ENCODE measurements at regions of chr11 and their contacts with region 1.

Region 1: DNA sequence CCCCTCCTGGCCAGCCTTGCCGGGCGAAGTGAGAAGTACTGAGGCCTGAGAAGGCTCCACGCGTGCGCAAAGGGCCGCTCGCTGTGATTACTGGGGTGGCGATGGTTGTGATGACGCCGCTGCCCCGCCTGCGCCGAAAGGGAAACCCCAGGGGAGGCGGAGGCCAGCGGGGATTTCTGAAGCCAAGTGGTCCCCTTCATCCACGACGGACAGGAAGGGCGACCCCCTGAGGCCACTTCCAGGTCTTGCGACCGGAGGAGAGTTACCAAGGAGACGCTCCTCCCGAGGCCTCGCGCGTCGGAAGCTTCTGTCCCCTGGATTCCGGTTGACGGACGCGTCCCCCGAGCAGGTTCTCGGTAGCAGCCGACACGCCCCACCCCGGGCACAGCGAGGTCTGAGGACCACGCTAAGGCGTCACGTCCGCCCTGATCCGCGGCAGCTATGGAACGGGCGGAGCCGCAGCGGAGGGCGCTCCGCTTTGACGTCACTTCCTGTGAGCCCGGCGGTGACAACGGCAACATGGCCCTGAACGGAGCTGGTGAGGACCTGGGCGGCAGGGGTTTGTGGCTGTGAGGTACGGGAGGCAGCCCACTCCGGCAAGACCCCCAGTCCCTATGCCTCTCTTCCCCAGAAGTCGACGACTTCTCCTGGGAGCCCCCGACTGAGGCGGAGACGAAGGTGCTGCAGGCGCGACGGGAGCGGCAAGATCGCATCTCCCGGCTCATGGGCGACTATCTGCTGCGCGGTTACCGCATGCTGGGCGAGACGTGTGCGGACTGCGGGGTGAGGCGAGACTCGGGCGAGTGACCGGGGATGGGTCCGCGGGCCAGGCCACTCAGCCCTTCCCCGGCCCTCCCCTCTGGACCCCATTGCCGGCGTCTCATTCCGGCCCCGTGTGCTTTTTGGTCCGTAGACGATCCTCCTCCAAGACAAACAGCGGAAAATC is at the start of gene ZNRD2:
- DNase-seq: peak; percentile 99
- H3K4me3 Mint-ChIP-seq: peak within 1 kb of the TSS; percentile 87
- H3K27ac Mint-ChIP-seq: peak within 1 kb of the TSS; percentile 97
- H3K4me1 Mint-ChIP-seq: peaks cover 61% of the 10 kb centered on the region
- H3K27me3 Mint-ChIP-seq: no peaks in the 10 kb centered on the region
- total RNA-seq, gene ZNRD2: 41.4 to 42.5 TPM

Region 2: GRCh38 chr11:63768237-63769043 is 1801.8 kb before region 1 on chr11 and contains the start of gene ZFTA:
- CTCF ChIA-PET with region 1: no interaction called
- intact Hi-C with region 1: no loop called
- DNase-seq: peak; percentile 49
- H3K4me3 Mint-ChIP-seq: peak within 1 kb of the TSS; percentile 88
- H3K27ac Mint-ChIP-seq: no peak within 1 kb of the TSS
- H3K4me1 Mint-ChIP-seq: peaks cover 11% of the 10 kb centered on the region
- H3K27me3 Mint-ChIP-seq: peaks cover 12% of the 10 kb centered on the region
- total RNA-seq, gene ZFTA: 0.91 TPM

Region 3: GRCh38 chr11:65366340-65366773 is 203.9 kb before region 1 on chr11:
- CTCF ChIA-PET with region 1: no interaction called
- intact Hi-C with region 1: loop called (anchors 5 kb)
- DNase-seq: peak; percentile 46
- H3K4me3 Mint-ChIP-seq: no peak overlapping the region
- H3K27ac Mint-ChIP-seq: no peak overlapping the region
- H3K4me1 Mint-ChIP-seq: peaks cover 4% of the 10 kb centered on the region
- H3K27me3 Mint-ChIP-seq: no peaks in the 10 kb centered on the region

Region 4: DNA sequence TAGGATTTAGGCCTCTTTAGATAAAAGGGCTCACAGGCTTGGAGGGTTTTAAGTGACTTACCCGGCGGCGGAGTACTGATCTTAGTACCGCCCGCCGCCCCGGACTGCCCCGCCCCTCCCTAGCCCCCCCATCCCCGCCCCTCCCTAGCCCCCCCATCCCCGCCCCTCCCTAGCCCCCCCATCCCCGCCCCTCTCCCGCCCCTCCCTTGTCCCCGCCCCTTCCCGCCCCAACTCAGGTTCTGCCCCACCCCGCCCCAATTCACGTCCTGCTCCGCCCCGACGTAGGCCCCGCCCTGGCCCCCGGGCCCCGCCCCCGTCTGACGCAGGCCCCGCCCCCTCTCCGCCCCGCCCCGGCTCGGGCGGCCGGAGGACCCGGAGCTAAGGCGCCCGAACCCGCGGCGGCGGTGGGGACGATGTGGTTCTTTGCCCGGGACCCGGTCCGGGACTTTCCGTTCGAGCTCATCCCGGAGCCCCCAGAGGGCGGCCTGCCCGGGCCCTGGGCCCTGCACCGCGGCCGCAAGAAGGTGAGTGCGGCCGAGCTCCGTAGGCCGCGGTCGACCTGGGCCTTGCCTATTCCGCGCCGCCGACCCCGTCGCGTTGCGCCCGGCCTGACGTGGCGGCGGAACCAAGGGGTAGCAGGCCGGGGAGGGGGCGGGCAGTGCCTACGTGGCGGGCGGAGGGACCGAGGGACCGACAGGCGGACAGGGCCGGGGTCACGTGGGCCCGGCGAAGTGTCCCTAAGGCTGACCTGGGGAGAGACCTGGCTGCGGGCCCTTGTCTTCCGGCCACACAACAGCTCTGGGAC is 45.3 kb before region 1 on chr11 and contains the start of gene SCYL1:
- CTCF ChIA-PET with region 1: interaction called, 5 read pairs
- intact Hi-C with region 1: loop called (anchors 1 kb)
- DNase-seq: peak; percentile 79
- H3K4me3 Mint-ChIP-seq: peak within 1 kb of the TSS; percentile 82
- H3K27ac Mint-ChIP-seq: peak within 1 kb of the TSS; percentile 77
- H3K4me1 Mint-ChIP-seq: peaks cover 61% of the 10 kb centered on the region
- H3K27me3 Mint-ChIP-seq: no peaks in the 10 kb centered on the region
- total RNA-seq, gene SCYL1: 57.9 to 58.3 TPM

Region 5: GRCh38 chr11:65551572-65552398 is 18.5 kb before region 1 on chr11:
- CTCF ChIA-PET with region 1: interaction called, 11 read pairs
- intact Hi-C with region 1: loop called (anchors 1 kb)
- DNase-seq: peak; percentile 76
- H3K4me3 Mint-ChIP-seq: no peak overlapping the region
- H3K27ac Mint-ChIP-seq: peak overlapping the region; percentile 61
- H3K4me1 Mint-ChIP-seq: peaks cover 63% of the 10 kb centered on the region
- H3K27me3 Mint-ChIP-seq: no peaks in the 10 kb centered on the region

Region 6: DNA sequence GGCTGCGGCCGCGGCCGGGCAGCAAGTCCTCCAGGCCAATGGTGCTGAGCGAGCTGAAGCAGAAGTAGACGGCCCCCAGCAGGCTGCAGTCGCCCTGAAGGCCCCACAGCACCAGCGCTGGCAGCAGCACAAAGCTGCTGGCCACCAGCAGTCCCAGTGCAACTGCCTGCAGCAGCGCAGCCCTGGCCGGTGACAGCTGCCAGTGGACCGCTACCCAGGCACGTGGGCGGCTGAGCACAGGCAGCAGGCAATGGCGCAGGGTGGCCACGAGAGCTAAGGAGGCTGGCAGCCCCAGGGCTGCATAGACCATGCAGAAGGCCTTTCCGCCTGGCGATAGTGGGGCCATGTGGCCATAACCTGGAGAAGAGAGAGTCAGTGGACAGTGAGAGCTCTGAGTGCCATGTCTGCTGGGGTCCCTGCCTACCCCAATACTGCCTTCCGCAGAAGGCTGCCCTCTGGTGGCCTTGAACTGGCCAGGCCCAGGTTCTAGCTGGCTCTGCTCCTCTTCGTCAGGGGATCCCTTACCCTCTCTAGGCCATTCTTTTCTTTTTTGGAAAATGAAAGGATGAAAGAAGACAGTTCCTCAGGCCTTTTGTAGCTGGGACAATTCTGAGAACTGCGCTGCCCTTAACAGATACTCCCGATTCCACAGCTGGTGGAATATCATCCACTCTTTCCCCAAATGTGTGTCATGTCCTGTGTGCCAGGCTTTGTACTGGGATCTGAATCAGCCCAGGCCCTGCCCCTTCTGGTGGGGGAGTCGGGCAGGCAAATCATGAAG is 23.5 kb after region 1 on chr11:
- CTCF ChIA-PET with region 1: interaction called, 46 read pairs
- intact Hi-C with region 1: loop called (anchors 1 kb)
- DNase-seq: peak; percentile 55
- H3K4me3 Mint-ChIP-seq: no peak overlapping the region
- H3K27ac Mint-ChIP-seq: no peak overlapping the region
- H3K4me1 Mint-ChIP-seq: peaks cover 16% of the 10 kb centered on the region
- H3K27me3 Mint-ChIP-seq: no peaks in the 10 kb centered on the region

Region 7: GRCh38 chr11:65652511-65653231 is 82.4 kb after region 1 on chr11:
- CTCF ChIA-PET with region 1: no interaction called
- intact Hi-C with region 1: loop called (anchors 2 kb)
- DNase-seq: peak; percentile 95
- H3K4me3 Mint-ChIP-seq: peak overlapping the region; percentile 80
- H3K27ac Mint-ChIP-seq: peak overlapping the region; percentile 94
- H3K4me1 Mint-ChIP-seq: peaks cover 46% of the 10 kb centered on the region
- H3K27me3 Mint-ChIP-seq: no peaks in the 10 kb centered on the region

Region 8: GRCh38 chr11:66001942-66002647 is 431.8 kb after region 1 on chr11 and contains the starts of genes BANF1 and EIF1AD:
- CTCF ChIA-PET with region 1: no interaction called
- intact Hi-C with region 1: loop called (anchors 5 kb)
- DNase-seq: peak; percentile 96
- H3K4me3 Mint-ChIP-seq: peak within 1 kb of the TSS; percentile 99
- H3K27ac Mint-ChIP-seq: peak within 1 kb of the TSS; percentile 99
- H3K4me1 Mint-ChIP-seq: peaks cover 44% of the 10 kb centered on the region
- H3K27me3 Mint-ChIP-seq: no peaks in the 10 kb centered on the region
- total RNA-seq, gene BANF1: 347 to 369 TPM
- total RNA-seq, gene EIF1AD: 31.2 to 31.7 TPM